Heart right ventricle (tissue), 16 donors: ENCODE measurements at regions of chr1 and their contacts with region 1.

Region 1: GRCh38 chr1:159798893-159799292 is 3.3 kb upstream of the FCRL6 start:
- DNase-seq: peak; percentile 31 to 79
- ATAC-seq: peak; percentile 81 to 94 (median 90)
- H3K4me3 ChIP-seq: no peak overlapping the region
- H3K27ac ChIP-seq: no peak overlapping the region
- H3K4me1 ChIP-seq: peaks cover 0 to 37% (median 0%) of the 10 kb centered on the region in 9 donors
- H3K27me3 ChIP-seq: peaks cover 0 to 30% (median 15%) of the 10 kb centered on the region in 7 donors
- CTCF ChIP-seq: peak; percentile 58 to 85 (median 81)

Region 2: DNA sequence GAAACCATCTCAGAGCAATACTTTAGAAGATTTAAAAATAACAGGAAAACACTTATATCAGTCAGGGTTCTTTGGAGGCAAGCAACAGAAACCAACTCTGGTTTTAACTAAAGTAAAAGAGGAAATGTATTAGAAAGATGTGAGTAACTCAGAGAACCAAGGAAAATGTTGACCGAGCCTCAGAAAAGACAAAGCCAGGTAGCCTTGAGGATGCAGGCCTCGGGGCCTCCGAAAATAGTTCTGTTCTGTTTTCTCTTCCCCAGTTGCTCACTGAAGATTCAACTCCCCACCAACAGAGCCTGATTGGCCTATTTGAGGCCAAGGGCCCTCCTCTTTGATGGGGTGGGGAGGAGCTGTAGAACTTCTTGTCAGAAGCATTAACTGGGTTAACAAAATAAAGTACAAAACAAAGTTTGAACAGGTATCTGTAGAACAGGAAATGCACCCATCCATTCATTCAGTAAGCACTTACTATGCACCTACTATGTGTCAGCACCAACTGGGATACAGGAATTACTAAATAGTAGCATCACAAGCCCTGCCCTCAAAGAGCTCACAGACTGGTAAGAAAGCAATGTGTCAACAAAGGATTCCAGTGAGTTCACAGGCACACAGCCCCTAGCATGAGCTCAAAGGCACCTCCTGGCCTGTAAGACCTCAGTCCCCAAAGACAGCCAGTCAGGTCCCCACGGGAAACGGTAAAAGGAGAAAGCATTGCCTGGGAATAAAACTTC is 40.4 kb after region 1 on chr1:
- intact Hi-C with region 1: loop called in 1 of 10 experiments (anchors 5 kb)
- DNase-seq: no peak
- ATAC-seq: no peak
- H3K4me3 ChIP-seq: no peak overlapping the region
- H3K27ac ChIP-seq: no peak overlapping the region
- H3K4me1 ChIP-seq: no peaks in the 10 kb centered on the region
- H3K27me3 ChIP-seq: no peaks in the 10 kb centered on the region
- CTCF ChIP-seq: no peak

Region 3: GRCh38 chr1:159891275-159892157 is 92.6 kb after region 1 on chr1:
- intact Hi-C with region 1: loop called (anchors 1 to 5 kb)
- DNase-seq: peak; percentile 82 to 84
- ATAC-seq: peak; percentile 71 to 90 (median 86)
- H3K4me3 ChIP-seq: no peak overlapping the region
- H3K27ac ChIP-seq: peak overlapping the region in 6 of 10 donors; percentile 39 to 86 (median 80)
- H3K4me1 ChIP-seq: peaks cover 0 to 48% (median 32%) of the 10 kb centered on the region in 9 donors
- H3K27me3 ChIP-seq: no peaks in the 10 kb centered on the region
- CTCF ChIP-seq: peak; percentile 83 to 99 (median 94)

Region 4: GRCh38 chr1:159945483-159946241 is 146.8 kb after region 1 on chr1 and contains the start of gene IGSF9:
- intact Hi-C with region 1: loop called in 7 of 10 experiments (anchors 1 to 5 kb)
- DNase-seq: peak; percentile 85 to 88
- ATAC-seq: peak; percentile 93 to 98 (median 96)
- H3K4me3 ChIP-seq: peak within 1 kb of the TSS in 9 of 10 donors; percentile 35 to 53 (median 43)
- H3K27ac ChIP-seq: no peak within 1 kb of the TSS
- H3K4me1 ChIP-seq: peaks cover 0 to 15% (median 12%) of the 10 kb centered on the region in 9 donors
- H3K27me3 ChIP-seq: peaks cover 0 to 30% (median 18%) of the 10 kb centered on the region in 7 donors
- CTCF ChIP-seq: peak; percentile 42 to 90 (median 73)
- total RNA-seq, gene IGSF9: 0.07 to 0.15 (median 0.08) TPM in 3 of 10 donors, not detected in the others

Region 5: DNA sequence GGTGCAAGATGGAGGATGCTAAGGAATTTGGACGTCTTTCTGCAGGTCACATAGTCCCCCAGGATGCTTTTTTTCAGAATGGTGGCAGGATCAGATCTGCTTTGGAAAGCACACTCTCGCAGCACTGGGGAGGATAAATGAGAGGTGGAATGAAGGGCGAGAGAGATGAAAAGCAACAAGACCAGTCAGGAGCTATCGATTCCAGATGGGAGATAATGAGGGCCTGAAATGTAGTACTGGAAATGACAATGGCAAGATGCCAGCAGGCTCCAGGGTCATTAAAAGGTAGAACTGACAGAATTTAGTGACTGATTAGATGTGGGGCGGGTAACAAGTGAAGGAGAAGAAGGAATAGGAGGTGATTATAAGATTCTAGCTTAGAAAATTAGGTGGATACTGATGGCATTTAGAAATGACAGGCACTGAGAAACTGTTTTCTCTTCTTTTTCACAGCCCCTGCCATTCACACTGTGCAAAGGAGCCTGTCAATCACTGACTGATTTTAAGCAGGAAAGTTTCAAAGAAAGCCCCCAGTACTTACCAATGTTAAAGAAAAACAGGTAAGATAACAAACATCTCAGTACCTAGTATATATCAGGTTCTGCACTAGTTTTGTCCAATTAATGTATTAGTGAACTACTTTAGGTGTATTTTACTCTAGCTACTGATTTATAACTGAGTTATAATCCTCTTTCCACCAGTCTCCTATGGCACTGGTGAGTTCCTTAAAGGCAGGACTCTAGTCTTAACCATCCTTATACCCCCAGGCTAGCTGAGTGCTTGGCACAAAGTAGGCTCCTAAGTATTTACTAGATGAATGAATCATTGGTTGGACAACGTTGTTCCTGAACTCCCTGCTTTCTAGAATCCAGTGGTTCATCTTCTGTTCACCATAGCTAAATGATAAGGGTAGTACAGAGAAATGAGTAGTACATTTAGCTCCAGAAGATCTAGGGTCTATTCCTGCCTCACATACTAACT is 223.7 kb after region 1 on chr1:
- intact Hi-C with region 1: loop called in 1 of 10 experiments (anchors 5 kb)
- DNase-seq: no peak
- ATAC-seq: no peak
- H3K4me3 ChIP-seq: no peak overlapping the region
- H3K27ac ChIP-seq: no peak overlapping the region
- H3K4me1 ChIP-seq: peaks cover 0 to 23% (median 18%) of the 10 kb centered on the region in 9 donors
- H3K27me3 ChIP-seq: no peaks in the 10 kb centered on the region
- CTCF ChIP-seq: no peak

Region 6: DNA sequence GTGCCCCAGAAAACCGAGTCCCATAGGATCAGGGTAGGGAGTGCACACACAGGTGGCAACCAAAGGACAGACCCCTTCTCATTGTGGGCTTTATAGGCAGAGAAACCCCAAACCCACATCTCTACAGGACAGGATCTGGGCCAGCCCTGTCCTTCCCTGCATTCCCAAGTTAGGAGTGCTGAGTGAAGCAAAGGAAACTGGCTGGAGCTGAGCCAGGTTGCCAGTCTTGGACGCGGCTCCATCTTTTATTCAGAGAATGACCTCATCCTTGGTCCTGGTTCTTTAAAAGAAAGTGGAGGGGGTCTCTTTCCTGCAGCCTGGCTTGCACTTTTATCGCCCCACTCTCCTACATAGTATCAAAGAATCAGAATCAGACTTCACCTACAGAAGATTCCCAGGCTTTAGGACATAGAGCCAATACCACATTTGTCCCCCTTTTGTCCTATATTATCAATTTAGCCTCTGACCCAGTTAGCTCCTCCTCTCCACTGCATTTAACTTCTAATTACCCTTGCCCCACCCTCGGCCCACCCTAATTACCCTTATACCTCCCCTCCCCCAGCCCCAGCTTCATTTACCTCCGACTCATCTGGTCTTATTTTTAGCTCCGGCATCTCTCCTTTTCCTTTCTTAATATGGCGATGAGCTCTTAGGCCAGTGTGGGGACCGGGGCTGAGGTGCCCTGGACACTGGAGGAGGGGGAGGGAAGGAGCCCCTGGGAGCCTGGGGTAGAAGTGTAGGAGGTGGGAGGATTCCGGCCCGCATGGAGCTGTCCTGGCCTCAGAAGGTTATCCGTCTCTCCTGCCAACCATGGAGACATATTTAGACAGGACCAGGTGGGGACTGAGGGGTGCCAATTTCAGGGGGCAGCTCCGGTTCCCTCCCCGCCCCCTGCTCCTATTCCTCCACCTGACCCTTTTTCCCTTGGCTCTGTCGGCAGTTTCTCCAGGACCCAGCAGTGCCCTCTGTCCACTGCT is 391.0 kb after region 1 on chr1 and contains the start of gene CASQ1:
- intact Hi-C with region 1: no loop called
- DNase-seq: peak; percentile 56 to 62
- ATAC-seq: peak; percentile 31 to 68 (median 47)
- H3K4me3 ChIP-seq: peak within 1 kb of the TSS in 1 of 10 donors; percentile 26
- H3K27ac ChIP-seq: peak within 1 kb of the TSS in 9 of 10 donors; percentile 3 to 83 (median 66)
- H3K4me1 ChIP-seq: peaks cover 9 to 50% (median 18%) of the 10 kb centered on the region in 9 donors
- H3K27me3 ChIP-seq: no peaks in the 10 kb centered on the region
- CTCF ChIP-seq: no peak
- total RNA-seq, gene CASQ1: 17.5 to 68.9 (median 45.4) TPM